A549 (cell line): ENCODE measurements at regions of chr9 and their contacts with region 1.

Region 1: DNA sequence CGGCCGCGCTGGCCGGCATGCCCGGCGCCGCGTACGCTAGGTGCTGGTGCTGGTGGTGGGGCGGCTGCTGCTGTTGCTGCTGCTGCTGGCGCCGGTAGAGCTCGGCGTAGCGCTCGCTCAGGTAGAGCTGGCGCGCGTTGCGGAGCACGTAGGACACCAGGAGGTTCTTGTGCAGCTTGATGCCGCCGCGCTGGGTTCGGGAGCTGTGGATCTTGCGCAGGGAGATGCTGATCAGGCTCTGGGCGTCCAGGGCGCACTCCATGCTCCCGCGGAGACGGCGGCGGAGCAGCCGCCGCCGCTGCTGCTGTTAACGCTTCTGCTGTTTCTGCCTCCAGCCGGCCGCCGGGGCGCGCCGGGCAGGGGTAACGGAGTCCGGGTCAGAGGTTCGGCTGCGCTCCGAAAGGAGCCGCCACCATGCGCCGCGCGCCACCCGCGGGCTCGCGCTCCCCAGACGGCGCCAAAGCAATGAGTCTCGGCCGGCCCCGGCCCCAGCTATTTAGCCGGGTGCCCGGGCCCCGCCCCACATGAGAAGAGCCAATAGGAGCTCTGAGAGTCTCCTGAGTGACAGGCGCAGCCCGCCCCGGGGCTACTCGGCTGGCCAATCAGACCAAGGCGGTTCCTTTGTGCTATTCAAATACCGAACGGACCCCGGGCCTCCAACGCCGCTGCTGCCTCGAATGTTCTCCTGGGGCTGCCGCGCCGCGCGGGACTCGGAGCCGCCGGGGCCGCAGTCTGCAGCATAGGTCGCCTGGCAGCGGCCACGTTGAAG is at the start of gene IER5L:
- DNase-seq: peak; percentile 95 to 99
- ATAC-seq: peak; percentile 49 to 76
- H3K4me3 ChIP-seq: peak within 1 kb of the TSS; percentile 87
- H3K27ac ChIP-seq: peak within 1 kb of the TSS; percentile 99
- H3K4me1 ChIP-seq: peaks cover 55% of the 10 kb centered on the region
- CTCF ChIP-seq: no peak; the same call in 2 of the 3 replicates
- EP300 ChIP-seq: no peak
- POLR2A ChIP-seq: peak; percentile 99
- RAD21 ChIP-seq: peak in 1 of 2 experiments; percentile 43; a peak in 2 of 5 replicates
- polyA plus RNA-seq, gene IER5L: 16.8 and 25.1 TPM in 2 replicates

Region 2: DNA sequence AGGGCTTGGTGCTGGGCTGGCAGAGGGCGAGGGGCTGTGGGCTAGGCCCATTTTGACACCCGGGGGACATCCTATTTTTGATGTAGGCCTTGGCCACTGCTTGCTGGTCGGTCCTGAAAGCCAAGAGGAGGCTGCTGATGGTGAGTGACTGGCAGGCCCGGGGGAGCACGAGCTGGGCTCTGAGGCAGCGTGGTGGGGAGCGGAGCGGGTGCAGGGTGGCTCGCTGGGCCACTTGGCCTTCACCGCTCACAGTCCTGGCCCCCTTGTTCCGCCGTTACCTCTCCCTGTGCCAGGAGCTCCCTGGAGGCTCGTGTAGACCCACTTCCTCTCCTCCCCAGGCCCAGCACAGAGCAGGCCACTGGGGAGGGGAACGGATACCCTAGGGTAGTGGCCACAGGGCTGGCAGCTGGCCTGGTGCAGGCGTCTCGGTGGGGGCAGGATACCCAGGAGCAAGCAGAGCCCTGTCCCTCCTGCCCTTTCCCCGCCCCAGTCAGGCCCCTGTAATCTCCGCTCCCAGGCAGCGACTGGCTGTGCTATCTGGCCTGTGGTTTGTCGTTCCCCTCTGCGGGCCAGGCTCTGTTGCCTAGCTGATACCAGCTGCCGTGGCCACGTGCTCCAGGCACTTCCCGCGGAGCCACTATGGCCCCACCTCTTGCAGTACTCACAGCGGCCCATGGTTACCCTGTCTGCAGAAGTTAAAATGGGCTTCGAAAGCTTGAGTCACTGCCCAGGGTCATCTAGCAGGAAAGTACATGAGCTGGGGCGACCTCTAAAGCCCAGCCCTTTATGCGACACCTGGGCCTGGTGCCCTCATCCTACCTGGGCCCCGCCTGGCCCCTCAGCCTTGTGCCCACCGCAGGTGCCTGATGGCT is 108.7 kb before region 1 on chr9:
- CTCF ChIA-PET with region 1: no interaction called
- POLR2A ChIA-PET with region 1: no interaction called
- DNase-seq: no peak
- ATAC-seq: peak; percentile 12 to 21; a peak in 2 of 6 replicates
- H3K4me3 ChIP-seq: no peak overlapping the region
- H3K27ac ChIP-seq: no peak overlapping the region
- H3K4me1 ChIP-seq: no peaks in the 10 kb centered on the region
- CTCF ChIP-seq: no peak
- EP300 ChIP-seq: no peak
- POLR2A ChIP-seq: no peak
- RAD21 ChIP-seq: no peak

Region 3: DNA sequence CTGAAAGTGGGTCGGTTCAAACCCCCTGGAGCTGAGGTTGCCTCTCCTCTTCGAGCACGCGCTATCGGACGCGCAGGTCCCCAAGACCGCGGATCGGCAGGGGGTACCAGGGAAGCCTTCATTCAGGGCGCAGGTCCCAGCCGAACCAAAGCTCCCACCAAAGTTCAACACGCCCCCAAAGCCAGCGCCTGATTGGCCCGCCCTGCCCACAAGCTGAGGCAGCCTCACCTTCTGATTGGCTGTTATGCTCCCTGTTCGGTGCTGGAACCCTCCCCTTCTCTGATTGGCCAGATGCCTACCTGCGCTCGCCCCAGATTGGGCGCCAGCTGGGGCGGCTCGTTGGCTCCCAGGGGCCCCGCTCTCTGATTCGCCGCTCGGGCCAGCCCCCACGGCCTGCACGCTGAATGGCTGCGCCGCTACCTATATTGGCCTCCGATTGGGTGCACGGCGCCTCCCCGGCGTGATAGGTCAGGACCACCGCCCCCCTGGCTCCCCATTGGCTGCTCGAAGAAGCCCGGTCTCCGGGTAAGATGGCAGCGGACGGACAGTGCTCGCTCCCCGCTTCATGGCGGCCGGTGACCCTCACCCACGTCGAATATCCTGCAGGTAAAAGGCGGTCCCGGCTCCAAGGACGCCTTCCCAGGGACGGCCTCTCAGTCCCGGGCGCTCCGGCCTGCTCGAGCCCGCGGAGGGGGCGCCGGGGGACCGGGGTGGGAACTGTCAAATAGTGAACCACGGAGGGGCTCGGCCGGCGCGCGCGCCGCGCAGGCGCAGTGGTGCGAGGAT is 97.2 kb before region 1 on chr9 and contains the start of gene DOLPP1:
- CTCF ChIA-PET with region 1: no interaction called
- POLR2A ChIA-PET with region 1: no interaction called
- DNase-seq: peak; percentile 99 to 100
- ATAC-seq: peak; percentile 96 to 98
- H3K4me3 ChIP-seq: peak within 1 kb of the TSS; percentile 78
- H3K27ac ChIP-seq: peak within 1 kb of the TSS; percentile 90 to 94
- H3K4me1 ChIP-seq: peaks cover 18% of the 10 kb centered on the region; the same call in 2 of the 3 replicates
- CTCF ChIP-seq: no peak
- EP300 ChIP-seq: no peak
- POLR2A ChIP-seq: peak; percentile 60
- RAD21 ChIP-seq: no peak
- polyA plus RNA-seq, gene DOLPP1: 25.6 and 31.4 TPM in 2 replicates

Region 4: DNA sequence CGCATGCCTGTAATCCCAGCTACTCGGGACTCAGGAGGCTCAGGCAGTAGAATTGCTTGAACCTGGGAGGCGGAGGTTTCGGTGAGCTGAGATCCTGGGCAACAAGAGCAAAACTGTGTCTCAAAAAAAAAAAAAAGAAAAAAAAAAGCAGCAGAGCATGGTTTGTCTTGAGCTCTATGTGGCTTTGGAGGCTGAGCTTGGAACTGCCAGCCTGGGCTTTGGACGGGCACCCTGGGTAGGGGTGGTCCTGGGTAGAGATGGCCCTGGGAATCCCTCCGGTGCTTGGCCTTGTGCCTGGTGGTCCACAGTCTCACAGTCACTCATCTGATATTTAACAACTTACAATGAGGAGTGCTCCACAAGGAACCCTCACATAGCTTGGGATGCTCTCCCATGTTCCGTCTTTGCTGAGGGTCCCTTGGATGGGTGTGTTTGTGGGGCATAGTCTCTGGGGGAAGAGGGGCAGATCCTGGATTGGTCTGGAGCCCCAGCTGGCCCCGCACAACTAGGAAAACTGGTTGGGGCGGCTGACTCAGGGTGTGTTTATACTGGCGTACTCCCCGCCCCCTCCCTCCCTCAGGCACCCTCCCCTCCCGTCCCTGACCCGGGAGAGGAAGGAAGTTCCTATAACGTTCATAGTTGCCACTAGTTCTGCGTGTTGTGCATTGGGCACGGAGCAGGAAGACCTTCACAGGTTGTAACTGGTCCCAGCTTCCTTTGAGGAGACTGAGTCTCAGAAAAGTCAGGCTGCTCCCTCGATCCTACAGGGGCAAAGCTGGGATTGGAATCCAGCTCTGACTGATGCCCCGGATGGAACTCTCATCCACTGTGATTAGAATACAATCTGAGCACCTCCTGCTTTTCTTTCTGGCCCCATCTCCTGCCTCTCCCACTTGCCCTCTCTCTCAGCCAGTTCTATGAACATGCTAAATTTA is 11.1 kb before region 1 on chr9:
- CTCF ChIA-PET with region 1: interaction called, 50 read pairs
- POLR2A ChIA-PET with region 1: interaction called, 25 read pairs
- DNase-seq: peak; percentile 79 to 97
- ATAC-seq: peak; percentile 79 to 88
- H3K4me3 ChIP-seq: peak overlapping the region; percentile 9; the same call in 1 of the 3 replicates
- H3K27ac ChIP-seq: peak overlapping the region; percentile 94 to 99
- H3K4me1 ChIP-seq: peaks cover 48% of the 10 kb centered on the region
- CTCF ChIP-seq: no peak
- EP300 ChIP-seq: no peak
- POLR2A ChIP-seq: peak; percentile 70
- RAD21 ChIP-seq: no peak

Region 5: GRCh38 chr9:129333953-129334724 is 156.2 kb after region 1 on chr9:
- CTCF ChIA-PET with region 1: interaction called, 10 read pairs
- POLR2A ChIA-PET with region 1: interaction called, 93 read pairs
- DNase-seq: peak; percentile 95 to 99
- ATAC-seq: peak; percentile 93 to 94
- H3K4me3 ChIP-seq: peak overlapping the region; percentile 7; the same call in 1 of the 3 replicates
- H3K27ac ChIP-seq: peak overlapping the region; percentile 99 to 100
- H3K4me1 ChIP-seq: peaks cover 58% of the 10 kb centered on the region
- CTCF ChIP-seq: peak; percentile 13; the same call in 1 of the 3 replicates
- EP300 ChIP-seq: peak; percentile 95 to 98
- POLR2A ChIP-seq: peak; percentile 4; the same call in 1 of the 2 replicates
- RAD21 ChIP-seq: peak; percentile 25 to 78; a peak in 4 of 5 replicates

Region 6: GRCh38 chr9:129460323-129461261 is 282.6 kb after region 1 on chr9:
- CTCF ChIA-PET with region 1: interaction called, 13 read pairs
- POLR2A ChIA-PET with region 1: interaction called, 27 read pairs
- DNase-seq: peak; percentile 97 to 99
- ATAC-seq: peak; percentile 87 to 88
- H3K4me3 ChIP-seq: peak overlapping the region; percentile 37
- H3K27ac ChIP-seq: peak overlapping the region; percentile 98
- H3K4me1 ChIP-seq: peaks cover 46% of the 10 kb centered on the region
- CTCF ChIP-seq: peak; percentile 16; the same call in 1 of the 3 replicates
- EP300 ChIP-seq: peak; percentile 28 to 37; a peak in 2 of 5 replicates
- POLR2A ChIP-seq: no peak; the same call in none of the 2 replicates
- RAD21 ChIP-seq: no peak; a peak in 2 of 5 replicates

Region 7: DNA sequence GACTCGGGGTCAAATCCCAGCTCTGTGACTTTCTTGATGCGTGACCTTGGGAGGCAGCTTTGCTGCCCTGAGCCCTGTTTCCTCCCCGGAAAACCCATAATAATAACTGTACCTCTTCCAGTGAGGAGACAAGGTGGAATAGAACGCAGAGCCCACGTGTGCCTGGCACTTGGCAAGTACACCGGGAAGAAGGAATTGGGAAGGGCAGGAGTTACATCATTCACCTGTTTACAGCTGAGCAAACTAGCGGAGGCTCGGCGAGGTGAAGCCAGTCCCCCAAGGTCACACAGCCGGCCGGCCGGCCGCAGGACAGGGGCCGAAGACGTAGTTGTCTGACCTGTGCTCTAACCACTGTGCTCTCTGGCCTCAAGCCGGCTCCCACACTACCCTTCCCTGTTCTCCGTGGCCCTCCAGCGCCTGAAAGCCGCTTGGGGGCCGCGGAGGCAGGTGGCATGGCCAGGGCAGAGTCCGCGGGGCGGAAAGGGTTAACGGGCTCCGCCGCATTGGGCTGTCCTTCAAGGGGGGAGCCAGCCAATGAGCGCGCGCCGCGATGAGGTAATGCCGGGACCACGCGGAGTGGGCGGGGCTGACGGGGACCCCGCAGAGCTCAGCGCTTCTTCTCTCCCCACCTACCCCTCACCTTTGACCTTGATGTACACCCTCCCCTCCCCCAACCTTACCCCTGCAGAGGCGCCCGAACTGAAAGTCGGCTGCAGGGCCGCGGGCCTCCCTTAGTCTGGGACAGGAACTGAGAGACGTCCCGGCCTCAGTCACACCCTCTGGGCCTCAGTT is 317.8 kb after region 1 on chr9:
- CTCF ChIA-PET with region 1: interaction called, 90 read pairs
- POLR2A ChIA-PET with region 1: interaction called, 69 read pairs
- DNase-seq: peak; percentile 95 to 97
- ATAC-seq: peak; percentile 63 to 76
- H3K4me3 ChIP-seq: peak overlapping the region; percentile 63
- H3K27ac ChIP-seq: peak overlapping the region; percentile 99 to 100
- H3K4me1 ChIP-seq: peaks cover 86% of the 10 kb centered on the region
- CTCF ChIP-seq: no peak
- EP300 ChIP-seq: peak; percentile 27 to 42; a peak in 1 of 5 replicates
- POLR2A ChIP-seq: no peak; the same call in 1 of the 2 replicates
- RAD21 ChIP-seq: peak; percentile 14 to 50; a peak in 3 of 5 replicates

Region 8: GRCh38 chr9:129619787-129620668 is 442.1 kb after region 1 on chr9:
- CTCF ChIA-PET with region 1: interaction called, 82 read pairs
- POLR2A ChIA-PET with region 1: interaction called, 21 read pairs
- DNase-seq: peak; percentile 49 to 54
- ATAC-seq: peak; percentile 56 to 70
- H3K4me3 ChIP-seq: peak overlapping the region; percentile 75
- H3K27ac ChIP-seq: peak overlapping the region; percentile 96 to 98
- H3K4me1 ChIP-seq: peaks cover 35% of the 10 kb centered on the region
- CTCF ChIP-seq: peak; percentile 45
- EP300 ChIP-seq: no peak
- POLR2A ChIP-seq: peak; percentile 44
- RAD21 ChIP-seq: no peak